Activated naive CD8-positive, alpha-beta T cell treated with anti-CD3 and anti-CD28 coated beads, Interleukin-2, amount 10 ng/mL, durations not matched to agents 7 days and 5 days (primary cell): ENCODE measurements at regions of chr16 and their contacts with region 1.

Region 1: DNA sequence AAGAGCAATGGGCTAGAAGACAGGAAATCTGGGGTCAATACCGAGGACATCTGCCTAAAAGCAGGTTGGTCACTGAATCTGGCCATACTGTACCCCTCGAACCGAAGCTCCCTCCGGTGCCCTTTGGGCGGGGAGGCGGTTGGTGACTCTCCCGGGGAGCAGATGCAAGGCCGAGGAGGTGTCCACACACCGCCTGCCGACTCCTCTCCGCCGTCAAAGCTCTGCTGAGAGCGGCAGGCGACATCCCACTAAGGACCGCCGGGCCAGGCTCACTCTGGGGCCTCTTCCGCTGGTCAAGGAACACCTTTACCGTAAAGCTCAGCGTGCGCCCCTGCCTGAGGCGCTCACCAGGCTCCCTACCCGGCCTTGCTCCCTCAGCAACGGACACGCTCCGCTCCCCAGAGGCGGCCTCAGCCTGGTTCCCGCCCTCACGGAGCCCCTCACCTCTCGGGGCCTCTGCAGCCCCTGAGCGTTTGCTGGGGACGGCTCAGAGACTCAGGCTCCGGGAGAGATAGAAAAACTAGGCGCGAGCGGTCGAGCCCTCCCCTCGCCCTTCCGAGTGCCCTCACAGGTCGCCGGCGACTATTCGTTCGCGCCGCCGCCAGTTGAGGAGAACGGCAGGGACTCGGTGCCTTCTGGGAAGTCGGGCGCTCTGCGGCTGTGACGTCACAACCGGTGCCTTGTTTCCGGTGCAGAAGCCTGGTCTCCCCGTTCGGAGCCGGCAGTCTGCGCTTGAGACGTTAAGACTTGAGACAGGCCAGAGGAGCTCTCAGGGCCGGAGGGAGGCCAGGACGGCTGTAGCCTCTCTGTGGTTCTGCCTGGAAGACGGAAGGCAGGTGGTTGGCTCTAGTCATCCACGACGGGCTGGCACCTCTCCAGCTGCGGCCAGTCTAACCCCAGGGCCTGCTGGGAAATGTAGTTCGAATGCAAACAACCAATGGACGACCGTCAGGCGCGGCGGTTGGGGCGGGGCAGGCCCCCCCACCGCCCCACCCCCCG is at the start of gene ZNF200:
- DNase-seq: peak; percentile 94
- ATAC-seq: peak; percentile 91
- H3K4me3 Mint-ChIP-seq: peak within 1 kb of the TSS; percentile 94
- H3K27ac Mint-ChIP-seq: peak within 1 kb of the TSS; percentile 98
- H3K4me1 Mint-ChIP-seq: peaks cover 18% of the 10 kb centered on the region
- H3K27me3 Mint-ChIP-seq: peaks cover 9% of the 10 kb centered on the region
- total RNA-seq, gene ZNF200: 16.5 to 19.5 TPM

Region 2: DNA sequence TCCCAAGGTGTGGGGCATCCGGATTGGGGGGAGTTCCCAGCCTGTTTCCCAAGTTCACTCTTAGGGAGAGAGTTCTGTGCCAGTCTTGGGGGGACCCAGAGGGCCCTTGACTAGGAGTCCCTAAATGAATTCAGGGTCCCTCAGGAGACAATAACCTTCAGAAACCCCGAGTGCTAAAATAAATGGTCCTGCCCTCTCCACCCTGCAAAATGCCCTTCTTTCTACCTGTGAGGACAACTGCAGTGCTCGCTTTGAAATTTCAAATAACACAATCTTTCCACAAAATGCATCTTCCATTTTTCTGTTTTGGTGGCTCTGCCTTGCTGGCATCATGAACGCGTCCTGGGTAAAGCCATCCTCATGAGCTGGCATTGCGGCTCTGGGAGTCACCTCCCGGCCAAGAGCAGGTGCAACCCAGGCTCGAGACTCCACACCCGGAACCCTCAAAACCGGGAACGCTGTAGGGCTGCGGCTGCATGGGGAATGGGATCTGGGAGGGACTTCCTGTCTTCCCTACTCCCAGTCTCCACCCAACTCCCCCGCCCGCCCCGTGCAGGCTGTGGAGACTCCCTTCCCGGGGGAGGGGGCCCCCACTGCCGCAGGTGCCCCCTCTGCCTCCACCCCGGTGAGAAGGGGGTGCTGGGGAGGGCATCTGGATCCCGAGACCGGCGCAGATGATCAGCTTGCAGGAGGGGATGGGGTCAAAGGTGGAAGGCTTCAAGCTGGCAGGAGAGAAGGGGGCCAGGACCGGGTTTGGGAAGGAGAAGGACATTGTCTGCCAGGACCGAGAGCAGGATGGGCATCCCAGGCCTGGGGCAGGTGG is 122.6 kb before region 1 on chr16 and contains the start of gene ZNF205:
- POLR2A ChIA-PET with region 1: no interaction called
- DNase-seq: no peak
- ATAC-seq: no peak
- H3K4me3 Mint-ChIP-seq: no peak within 1 kb of the TSS
- H3K27ac Mint-ChIP-seq: no peak within 1 kb of the TSS
- H3K4me1 Mint-ChIP-seq: peaks cover 3% of the 10 kb centered on the region
- H3K27me3 Mint-ChIP-seq: peaks cover 2% of the 10 kb centered on the region
- total RNA-seq, gene ZNF205: not detected

Region 3: GRCh38 chr16:3194792-3195191 is 40.0 kb before region 1 on chr16:
- POLR2A ChIA-PET with region 1: no interaction called
- DNase-seq: no peak
- ATAC-seq: no peak
- H3K4me3 Mint-ChIP-seq: no peak overlapping the region
- H3K27ac Mint-ChIP-seq: no peak overlapping the region
- H3K4me1 Mint-ChIP-seq: peaks cover 13% of the 10 kb centered on the region
- H3K27me3 Mint-ChIP-seq: peaks cover 69% of the 10 kb centered on the region

Region 4: DNA sequence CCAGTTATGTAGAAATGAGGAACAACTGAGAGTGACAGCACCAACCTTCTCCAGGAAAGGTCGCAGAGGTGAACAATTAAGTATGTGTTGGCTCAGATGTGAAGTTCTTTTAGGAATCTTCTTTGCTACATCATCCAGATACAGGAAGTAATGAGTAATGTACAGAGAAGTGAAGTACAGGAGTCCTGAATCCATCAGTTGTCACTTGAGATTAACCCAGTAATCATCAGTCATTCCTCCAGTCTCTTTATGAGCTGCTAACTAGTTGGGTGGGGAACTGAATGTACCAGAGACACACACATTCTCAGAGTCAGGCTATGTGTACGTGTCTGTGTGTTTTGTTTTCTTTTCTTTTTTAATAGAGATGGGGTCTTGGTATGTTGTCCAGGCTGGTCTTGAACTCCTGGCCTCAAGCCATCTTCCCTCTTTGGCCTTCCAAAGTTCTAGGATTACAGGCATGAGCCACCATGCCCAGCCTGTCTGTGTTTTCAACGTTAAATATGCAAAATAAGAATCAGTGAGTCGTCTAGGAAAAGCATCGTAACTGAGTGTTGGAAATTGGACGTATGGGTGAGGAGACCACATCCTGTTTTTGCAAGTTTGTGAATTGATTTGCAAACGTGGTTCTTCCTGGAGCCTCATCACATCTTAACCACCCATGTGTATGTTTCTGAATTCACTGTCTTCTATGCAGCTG is 19.8 kb before region 1 on chr16:
- POLR2A ChIA-PET with region 1: interaction called, 13 read pairs
- DNase-seq: no peak
- ATAC-seq: peak; percentile 89
- H3K4me3 Mint-ChIP-seq: peak overlapping the region; percentile 67
- H3K27ac Mint-ChIP-seq: peak overlapping the region; percentile 97
- H3K4me1 Mint-ChIP-seq: peaks cover 28% of the 10 kb centered on the region
- H3K27me3 Mint-ChIP-seq: no peaks in the 10 kb centered on the region

Region 5: GRCh38 chr16:3264137-3265036 is 29.5 kb after region 1 on chr16:
- POLR2A ChIA-PET with region 1: interaction called, 17 read pairs
- DNase-seq: peak; percentile 96
- ATAC-seq: peak; percentile 90
- H3K4me3 Mint-ChIP-seq: peak overlapping the region; percentile 94
- H3K27ac Mint-ChIP-seq: peak overlapping the region; percentile 96
- H3K4me1 Mint-ChIP-seq: peaks cover 22% of the 10 kb centered on the region
- H3K27me3 Mint-ChIP-seq: no peaks in the 10 kb centered on the region